Adrenal gland (tissue), 19 donors: ENCODE measurements at regions of chr1 and their contacts with region 1.

Region 1: DNA sequence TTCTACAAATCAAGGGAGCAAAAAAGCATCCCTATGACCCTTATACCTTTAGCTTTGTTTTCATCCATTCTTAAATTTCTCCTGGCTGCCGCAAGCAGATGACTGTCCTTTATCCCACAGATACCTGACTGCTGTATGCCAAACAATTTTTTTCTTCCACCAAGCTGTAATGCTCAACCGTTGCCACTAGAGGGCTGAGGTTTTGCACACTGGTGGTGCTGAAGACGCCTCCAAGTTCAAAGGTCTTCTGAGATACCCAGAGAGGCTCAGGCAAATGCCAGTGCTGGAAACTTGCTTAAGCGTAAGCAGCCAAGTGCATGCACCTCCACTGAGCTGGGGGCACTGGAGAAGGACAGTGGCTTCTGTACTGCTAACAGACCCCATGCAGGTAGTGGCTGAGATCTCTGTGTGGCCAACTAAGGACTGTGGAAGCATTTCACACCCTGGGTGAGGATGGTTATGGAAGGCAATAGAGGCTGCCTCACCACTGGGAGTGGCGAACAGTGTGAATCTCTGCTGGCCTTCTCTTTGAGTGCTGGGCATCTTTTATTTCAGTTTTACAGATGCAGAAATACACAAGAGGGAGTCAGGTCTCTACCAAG is 28.5 kb downstream of the CNIH3 start:
- DNase-seq: peak; percentile 39 to 71 (median 52)
- H3K4me3 ChIP-seq: no peak overlapping the region
- H3K27ac ChIP-seq: no peak overlapping the region
- H3K4me1 ChIP-seq: no peaks in the 10 kb centered on the region
- H3K27me3 ChIP-seq: no peaks in the 10 kb centered on the region
- CTCF ChIP-seq: peak; percentile 74 to 89 (median 82)
- POLR2A ChIP-seq: no peak

Region 2: GRCh38 chr1:224513787-224514209 is 130.9 kb before region 1 on chr1:
- intact Hi-C with region 1: loop called in 1 of 2 experiments (anchors 10 kb)
- DNase-seq: peak; percentile 78 to 92 (median 83)
- H3K4me3 ChIP-seq: no peak overlapping the region
- H3K27ac ChIP-seq: no peak overlapping the region
- H3K4me1 ChIP-seq: no peaks in the 10 kb centered on the region
- H3K27me3 ChIP-seq: no peaks in the 10 kb centered on the region
- CTCF ChIP-seq: peak; percentile 82 to 95 (median 88)
- POLR2A ChIP-seq: no peak